ENCODE measurements at regions of chr16 and their contacts with region 1.

Region 1: GRCh38 chr16:56600398-56600999 is 7.9 kb upstream of the MT2A start:
- DNase-seq: peak in 5 of 10 donors; percentile 39 to 90 (median 53)

Region 2: GRCh38 chr16:56513972-56514371 is 86.5 kb before region 1 on chr16:
- intact Hi-C with region 1: loop called (anchors 2 kb)
- DNase-seq: peak in 4 of 10 donors; percentile 25 to 69 (median 54)

Region 3: DNA sequence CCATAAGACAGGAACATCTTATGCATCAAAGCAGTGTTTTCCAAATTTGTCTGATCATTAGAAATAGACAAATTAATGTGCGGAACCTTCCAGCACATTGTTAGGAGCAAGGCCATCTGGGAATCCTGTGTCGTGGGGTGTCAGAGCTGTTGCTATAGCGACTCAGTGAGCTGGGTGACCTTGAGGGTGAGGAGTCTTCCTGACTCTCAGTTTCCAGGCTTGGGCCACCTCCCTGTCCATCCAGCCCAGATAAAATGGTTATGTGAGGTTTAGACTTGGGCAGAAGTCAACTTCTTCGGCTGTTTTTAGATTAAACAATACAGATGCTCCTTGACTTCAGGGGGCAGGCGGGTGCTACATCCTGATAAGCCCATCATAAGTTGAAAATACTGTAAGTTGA is 102.3 kb after region 1 on chr16:
- intact Hi-C with region 1: loop called (anchors 1 kb)
- DNase-seq: no peak

Measured in posterior cingulate gyrus (tissue), 11 donors.